ENCODE measurements at regions of chrX and their contacts with region 1.

Region 1: DNA sequence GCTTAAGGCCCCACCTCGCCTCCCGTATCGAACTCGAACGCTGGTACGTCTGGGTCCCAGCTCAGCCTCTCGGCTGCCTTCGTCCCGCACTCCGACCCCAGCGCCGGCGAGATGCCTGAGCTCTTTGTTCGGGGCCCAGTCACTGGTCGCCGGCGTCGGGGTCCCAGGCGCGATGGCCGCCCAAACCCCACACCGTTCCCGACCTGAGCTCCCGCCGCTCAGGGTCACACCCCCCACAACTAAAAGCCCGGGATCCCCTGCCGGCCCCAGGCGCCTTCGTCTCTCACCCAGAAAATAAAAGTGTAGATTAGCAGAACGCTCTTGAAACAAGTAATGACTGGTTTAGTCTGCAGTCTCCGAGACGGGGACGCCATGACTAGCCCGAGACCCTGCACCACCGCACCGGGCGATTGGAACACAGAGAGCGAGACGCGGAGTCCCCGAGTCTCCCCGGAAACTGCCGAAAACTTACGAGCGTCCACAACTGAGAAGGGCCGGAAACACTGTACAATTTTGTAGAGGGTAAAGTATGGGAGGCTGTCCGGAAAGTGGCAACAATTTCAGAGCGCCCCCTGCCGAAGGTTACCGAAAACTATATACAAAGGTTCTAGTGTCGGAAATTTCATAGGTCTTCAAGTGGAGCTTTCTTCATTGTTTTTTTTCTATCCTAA is at the start of gene TSPAN6:
- DNase-seq: peak; percentile 88
- H3K4me3 Mint-ChIP-seq: peak within 1 kb of the TSS; percentile 88
- H3K27ac Mint-ChIP-seq: peak within 1 kb of the TSS; percentile 57
- H3K4me1 Mint-ChIP-seq: peaks cover 6% of the 10 kb centered on the region
- H3K27me3 Mint-ChIP-seq: peaks cover 24% of the 10 kb centered on the region
- total RNA-seq, gene TSPAN6: 0.12 TPM in 1 of 2 replicates, not detected in the other

Region 2: GRCh38 chrX:100512471-100512870 is 124.0 kb before region 1 on chrX:
- intact Hi-C with region 1: loop called (anchors 2 kb)
- DNase-seq: no peak
- H3K4me3 Mint-ChIP-seq: no peak overlapping the region
- H3K27ac Mint-ChIP-seq: no peak overlapping the region
- H3K4me1 Mint-ChIP-seq: no peaks in the 10 kb centered on the region
- H3K27me3 Mint-ChIP-seq: no peaks in the 10 kb centered on the region

Measured in activated CD4-positive, alpha-beta T cell treated with anti-CD3 and anti-CD28 coated beads, Interleukin-2, amount 10 ng/mL, durations not matched to agents 24 days and 14 days (primary cell).